Activated naive CD4-positive, alpha-beta T cell treated with anti-CD3 and anti-CD28 coated beads, Interleukin-2, amount 10 ng/mL, durations not matched to agents 7 days and 5 days (primary cell): ENCODE measurements at regions of chr9 and their contacts with region 1.

Region 1: GRCh38 chr9:33167046-33167808 is at the start of gene B4GALT1:
- DNase-seq: peak; percentile 97
- H3K4me3 Mint-ChIP-seq: peak within 1 kb of the TSS; percentile 92
- H3K27ac Mint-ChIP-seq: peak within 1 kb of the TSS; percentile 97
- H3K4me1 Mint-ChIP-seq: peaks cover 71% of the 10 kb centered on the region
- H3K27me3 Mint-ChIP-seq: no peaks in the 10 kb centered on the region

Region 2: DNA sequence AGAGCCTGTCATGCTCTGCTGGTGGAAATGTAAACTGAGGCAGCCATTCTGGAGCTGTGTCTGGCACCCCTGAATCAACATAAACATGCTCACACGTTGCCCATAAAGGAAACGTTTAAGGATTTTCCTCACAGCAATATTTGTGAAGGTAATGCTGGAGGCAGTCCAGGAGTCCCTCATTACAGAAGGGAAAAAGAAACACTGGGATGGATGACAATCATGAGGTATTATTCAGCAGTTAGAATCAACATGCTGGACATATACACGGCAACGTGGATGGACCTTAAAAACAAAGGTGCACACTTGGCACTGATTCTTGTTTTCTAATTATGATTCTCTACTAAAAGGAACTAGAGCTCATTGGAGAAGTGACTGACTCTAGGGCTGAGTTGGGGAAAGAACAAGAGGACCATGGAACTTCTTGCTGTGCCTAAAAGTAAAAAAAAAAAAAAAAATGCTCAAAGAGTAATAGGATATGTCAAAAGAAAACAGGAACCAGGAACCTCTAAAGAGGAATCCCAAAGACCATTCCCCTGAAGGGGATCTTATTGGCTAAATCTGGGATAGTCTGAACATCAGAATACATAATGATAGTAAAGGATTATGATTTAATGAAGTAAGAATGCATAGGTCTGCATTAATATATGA is 18.7 kb before region 1 on chr9:
- CTCF ChIA-PET with region 1: no interaction called
- DNase-seq: no peak
- H3K4me3 Mint-ChIP-seq: no peak overlapping the region
- H3K27ac Mint-ChIP-seq: no peak overlapping the region
- H3K4me1 Mint-ChIP-seq: peaks cover 64% of the 10 kb centered on the region
- H3K27me3 Mint-ChIP-seq: no peaks in the 10 kb centered on the region

Region 3: DNA sequence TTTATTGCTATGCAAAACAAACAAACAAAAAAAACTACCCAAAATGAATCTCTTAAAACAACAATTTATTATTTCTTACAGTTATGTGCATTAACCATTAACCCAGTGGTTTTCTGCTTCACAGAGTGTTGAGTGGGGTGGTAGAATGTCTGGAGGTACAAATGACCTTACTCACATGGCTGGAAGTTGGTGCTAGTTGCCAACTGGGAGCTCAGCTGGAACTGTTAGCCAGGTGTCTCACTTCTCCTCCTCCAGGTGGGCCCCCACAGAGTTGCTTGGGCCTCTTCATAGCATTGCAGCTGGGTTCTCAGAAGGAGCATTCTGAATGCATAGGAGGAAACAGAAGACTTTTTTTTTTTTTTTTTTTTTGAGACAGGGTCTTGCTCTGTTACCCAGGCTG is 10.4 kb after region 1 on chr9:
- CTCF ChIA-PET with region 1: no interaction called
- DNase-seq: no peak
- H3K4me3 Mint-ChIP-seq: no peak overlapping the region
- H3K27ac Mint-ChIP-seq: no peak overlapping the region
- H3K4me1 Mint-ChIP-seq: no peaks in the 10 kb centered on the region
- H3K27me3 Mint-ChIP-seq: peaks cover 16% of the 10 kb centered on the region

Region 4: DNA sequence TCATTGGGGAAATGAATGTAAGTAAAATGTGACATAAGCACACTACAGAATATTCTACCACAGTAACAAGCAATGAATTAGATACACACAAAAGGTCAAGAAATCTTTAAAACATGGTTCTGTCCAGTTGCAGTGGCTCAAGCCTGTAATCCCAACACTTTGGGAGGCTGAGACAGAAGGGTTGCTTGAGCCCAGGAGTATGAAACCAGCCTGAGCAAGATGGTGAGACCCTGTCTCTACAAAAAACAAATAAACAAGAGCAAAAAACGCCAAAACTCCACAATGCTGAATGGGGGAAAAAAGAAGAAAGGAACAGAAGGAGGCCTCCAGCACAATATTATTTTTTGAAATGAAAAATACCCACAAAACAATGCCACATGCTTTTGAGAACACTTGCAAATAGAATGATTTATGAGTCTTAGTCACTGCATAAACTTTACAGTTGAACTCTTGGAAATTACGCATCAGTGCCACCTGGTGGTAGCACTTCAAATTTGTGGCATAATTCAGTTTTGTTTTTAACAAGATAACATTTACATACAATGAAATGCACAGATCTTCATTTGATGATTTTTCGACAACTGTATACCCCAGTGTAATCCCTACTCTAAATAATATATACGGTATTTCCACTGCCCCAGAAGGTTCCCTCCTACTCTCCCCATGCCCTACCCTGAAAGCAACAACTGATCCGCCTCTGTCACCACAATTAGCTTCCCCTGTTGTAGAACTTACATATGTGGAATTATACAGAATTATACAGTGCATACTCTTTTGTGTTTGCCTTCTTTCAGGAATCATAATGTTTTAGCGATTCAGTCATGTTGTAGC is 58.3 kb after region 1 on chr9:
- CTCF ChIA-PET with region 1: interaction called, 38 read pairs
- DNase-seq: peak; percentile 83
- H3K4me3 Mint-ChIP-seq: no peak overlapping the region
- H3K27ac Mint-ChIP-seq: peak overlapping the region; percentile 16
- H3K4me1 Mint-ChIP-seq: peaks cover 38% of the 10 kb centered on the region
- H3K27me3 Mint-ChIP-seq: peaks cover 20% of the 10 kb centered on the region